Activated naive CD4-positive, alpha-beta T cell treated with anti-CD3 and anti-CD28 coated beads for 36 hours (primary cell): ENCODE measurements at regions of chr6 and their contacts with region 1.

Region 1: GRCh38 chr6:139364302-139364981 is 10.0 kb downstream of the CITED2 start:
- DNase-seq: no peak
- H3K4me3 Mint-ChIP-seq: no peak overlapping the region
- H3K27ac Mint-ChIP-seq: no peak overlapping the region
- H3K4me1 Mint-ChIP-seq: peaks cover 26% of the 10 kb centered on the region
- H3K27me3 Mint-ChIP-seq: no peaks in the 10 kb centered on the region

Region 2: GRCh38 chr6:139230391-139230840 is 134.0 kb before region 1 on chr6:
- CTCF ChIA-PET with region 1: interaction called, 17 read pairs
- intact Hi-C with region 1: loop called (anchors 1 kb)
- DNase-seq: peak; percentile 46
- H3K4me3 Mint-ChIP-seq: no peak overlapping the region
- H3K27ac Mint-ChIP-seq: no peak overlapping the region
- H3K4me1 Mint-ChIP-seq: peaks cover 5% of the 10 kb centered on the region
- H3K27me3 Mint-ChIP-seq: no peaks in the 10 kb centered on the region

Region 3: GRCh38 chr6:139625998-139626975 is 261.8 kb after region 1 on chr6:
- CTCF ChIA-PET with region 1: no interaction called
- intact Hi-C with region 1: no loop called
- DNase-seq: no peak
- H3K4me3 Mint-ChIP-seq: no peak overlapping the region
- H3K27ac Mint-ChIP-seq: no peak overlapping the region
- H3K4me1 Mint-ChIP-seq: no peaks in the 10 kb centered on the region
- H3K27me3 Mint-ChIP-seq: peaks cover 35% of the 10 kb centered on the region